ENCODE measurements at regions of chr7 and their contacts with region 1.

Region 1: DNA sequence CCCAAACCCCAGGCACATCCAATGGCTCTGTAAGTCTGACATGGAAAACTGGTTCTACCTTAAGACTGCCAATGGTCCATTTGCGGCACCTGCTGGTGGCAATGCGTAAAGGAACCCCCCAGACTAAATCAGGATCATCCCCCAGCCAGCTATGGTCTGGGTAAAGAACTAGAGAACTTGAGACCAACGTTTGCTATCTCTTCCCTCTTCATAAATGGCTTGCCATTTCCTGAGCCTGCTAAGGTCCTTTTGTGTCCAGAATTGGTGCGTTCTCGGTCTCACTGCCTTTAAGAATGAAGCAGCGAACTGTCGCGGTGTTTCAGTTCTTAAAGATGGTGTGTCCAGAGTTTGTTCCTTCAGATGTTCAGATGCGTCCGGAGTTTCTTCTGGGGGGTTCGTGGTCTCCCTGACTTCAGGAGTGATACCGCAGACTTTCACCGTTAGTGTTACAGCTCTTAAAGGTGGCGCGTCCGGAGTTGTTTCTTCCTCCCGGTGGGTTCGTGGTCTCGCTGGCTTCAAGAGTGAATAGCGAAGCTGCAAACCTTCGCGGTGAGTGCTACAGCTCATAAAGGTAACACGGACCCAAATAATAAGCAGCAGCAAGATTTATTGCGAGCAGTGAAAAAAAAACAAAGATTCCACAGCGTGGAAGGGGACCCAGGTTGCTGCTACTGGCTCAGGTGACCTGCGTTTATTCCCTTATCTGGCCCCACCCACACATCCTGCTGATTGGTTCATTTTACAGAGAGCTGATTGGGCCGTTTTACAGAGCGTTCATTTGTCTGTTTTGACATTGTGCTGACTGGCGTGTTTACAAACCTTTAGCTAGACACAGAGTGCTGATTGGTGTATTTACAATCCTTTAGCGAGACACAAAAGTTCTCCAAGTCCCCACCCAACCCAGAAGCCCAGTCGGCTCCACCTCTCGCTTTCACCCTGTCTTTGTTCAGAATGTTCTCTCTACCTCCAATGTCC is 95.4 kb downstream of the ELMO1 start:
- DNase-seq: peak; percentile 34 to 61 (median 57)
- H3K4me3 ChIP-seq: peak overlapping the region; percentile 14 to 72 (median 33)
- H3K4me3 Mint-ChIP-seq: peak overlapping the region; percentile 84 to 92
- H3K27ac ChIP-seq: peak overlapping the region in 1 of 2 donors; percentile 25
- H3K27ac Mint-ChIP-seq: peak overlapping the region; percentile 15 to 73 (median 62)
- H3K4me1 ChIP-seq: peaks cover 47% of the 10 kb centered on the region in 2 donors
- H3K4me1 Mint-ChIP-seq: peaks cover 79% of the 10 kb centered on the region
- H3K27me3 ChIP-seq: no peaks in the 10 kb centered on the region
- H3K27me3 Mint-ChIP-seq: peaks cover 0 to 4% (median 0%) of the 10 kb centered on the region in 3 donors
- CTCF ChIP-seq: peak; percentile 77

Region 2: DNA sequence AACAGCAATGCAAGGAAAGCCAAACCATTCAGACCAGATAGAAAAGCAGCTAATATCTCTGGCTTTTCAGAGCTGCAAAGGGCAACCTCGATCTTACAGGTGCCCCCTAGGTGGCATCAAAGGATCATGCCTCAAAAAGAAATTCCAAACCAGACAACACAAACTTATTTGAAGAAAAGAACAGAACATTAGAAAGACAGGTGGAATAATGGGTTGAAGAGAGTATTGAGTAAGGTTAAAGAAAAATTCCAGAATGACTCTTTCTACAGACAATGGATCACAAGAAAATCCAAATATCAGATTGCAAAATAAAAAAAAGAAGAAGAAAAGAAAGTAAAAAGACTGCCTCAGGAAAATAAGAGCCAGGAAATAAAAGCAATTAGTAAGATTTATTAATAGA is 118.3 kb before region 1 on chr7:
- intact Hi-C with region 1: loop called in 1 of 2 experiments (anchors 2 kb)
- DNase-seq: peak in 2 of 3 donors; percentile 14 to 19
- H3K4me3 ChIP-seq: no peak overlapping the region
- H3K4me3 Mint-ChIP-seq: no peak overlapping the region
- H3K27ac ChIP-seq: no peak overlapping the region
- H3K27ac Mint-ChIP-seq: peak overlapping the region in 2 of 7 donors; percentile 5 to 7
- H3K4me1 ChIP-seq: no peaks in the 10 kb centered on the region
- H3K4me1 Mint-ChIP-seq: no peaks in the 10 kb centered on the region
- H3K27me3 ChIP-seq: no peaks in the 10 kb centered on the region
- H3K27me3 Mint-ChIP-seq: no peaks in the 10 kb centered on the region
- CTCF ChIP-seq: peak; percentile 64

Region 3: GRCh38 chr7:37311355-37311754 is 41.9 kb before region 1 on chr7:
- intact Hi-C with region 1: loop called in 1 of 2 experiments (anchors 5 kb)
- DNase-seq: peak; percentile 34 to 48 (median 43)
- H3K4me3 ChIP-seq: no peak overlapping the region
- H3K4me3 Mint-ChIP-seq: no peak overlapping the region
- H3K27ac ChIP-seq: peak overlapping the region in 1 of 2 donors; percentile 71
- H3K27ac Mint-ChIP-seq: peak overlapping the region; percentile 85 to 95 (median 89)
- H3K4me1 ChIP-seq: peaks cover 33 to 41% of the 10 kb centered on the region in 2 donors
- H3K4me1 Mint-ChIP-seq: peaks cover 40% of the 10 kb centered on the region
- H3K27me3 ChIP-seq: no peaks in the 10 kb centered on the region
- H3K27me3 Mint-ChIP-seq: no peaks in the 10 kb centered on the region
- CTCF ChIP-seq: no peak

Region 4: DNA sequence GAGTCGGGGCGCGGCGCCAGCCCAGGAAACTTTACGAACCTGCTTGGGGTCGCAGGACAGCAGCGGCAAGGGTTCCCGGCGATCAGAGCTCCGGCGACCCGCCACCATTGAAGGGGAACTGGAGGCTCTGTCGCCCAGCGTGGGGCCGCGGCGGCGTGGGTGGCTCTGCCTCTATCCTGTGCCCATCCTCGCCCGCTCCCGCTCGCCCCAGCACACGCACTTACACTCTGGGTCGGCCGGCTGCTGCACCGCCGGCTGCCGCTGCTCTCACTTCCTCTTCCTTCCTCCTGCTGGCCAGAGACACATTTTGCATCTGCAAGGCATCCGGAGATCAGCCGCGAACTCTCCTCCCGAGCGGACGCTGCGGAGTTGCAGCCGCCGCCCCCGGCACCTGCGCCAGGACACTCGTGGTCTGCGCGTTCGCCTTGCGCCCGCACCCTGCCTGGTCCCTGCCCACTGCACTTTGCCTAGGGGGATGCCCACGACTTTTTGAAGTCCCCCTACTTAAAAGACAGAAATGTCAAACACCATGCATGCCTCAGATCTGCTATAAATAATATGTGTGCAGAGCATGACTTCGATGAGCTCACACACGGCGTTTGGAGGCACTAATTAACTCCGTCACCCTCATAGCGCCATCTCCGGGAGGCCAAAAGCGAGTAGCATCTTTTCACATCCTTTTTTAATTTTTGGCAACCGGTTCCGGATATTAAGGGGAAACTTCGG is 95.5 kb after region 1 on chr7 and contains the start of gene ELMO1:
- intact Hi-C with region 1: loop called in 1 of 2 experiments (anchors 1 kb)
- DNase-seq: peak; percentile 85 to 89 (median 87)
- H3K4me3 ChIP-seq: peak within 1 kb of the TSS; percentile 74 to 94 (median 91)
- H3K4me3 Mint-ChIP-seq: peak within 1 kb of the TSS; percentile 93 to 96
- H3K27ac ChIP-seq: peak within 1 kb of the TSS; percentile 89 to 92
- H3K27ac Mint-ChIP-seq: peak within 1 kb of the TSS; percentile 86 to 98 (median 93)
- H3K4me1 ChIP-seq: peaks cover 47 to 50% of the 10 kb centered on the region in 2 donors
- H3K4me1 Mint-ChIP-seq: peaks cover 52% of the 10 kb centered on the region
- H3K27me3 ChIP-seq: no peaks in the 10 kb centered on the region
- H3K27me3 Mint-ChIP-seq: peaks cover 0 to 5% (median 2%) of the 10 kb centered on the region in 3 donors
- CTCF ChIP-seq: peak; percentile 66
- polyA plus RNA-seq, gene ELMO1: 46.6 to 50.2 (median 46.7) TPM

Region 5: DNA sequence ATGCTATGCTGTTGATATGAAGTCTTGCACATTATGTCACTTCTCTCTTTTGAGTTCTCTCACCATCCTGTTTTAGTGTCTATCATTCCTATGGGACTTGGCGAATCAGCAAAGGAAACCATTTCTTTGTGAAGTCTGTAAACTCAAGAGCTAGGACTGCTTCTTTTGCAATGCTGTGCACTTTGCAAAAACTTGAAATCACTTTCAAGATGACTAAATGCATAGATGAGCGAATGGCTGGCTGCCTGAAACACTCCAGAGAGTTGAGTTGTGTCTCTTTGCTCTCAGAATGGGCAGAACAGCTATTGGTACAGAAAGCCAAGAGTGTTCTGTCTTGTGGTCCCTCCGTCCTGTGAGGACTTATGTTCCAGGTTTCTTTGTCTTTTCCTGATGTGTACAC is 113.7 kb after region 1 on chr7:
- intact Hi-C with region 1: no loop called
- DNase-seq: no peak
- H3K4me3 ChIP-seq: no peak overlapping the region
- H3K4me3 Mint-ChIP-seq: no peak overlapping the region
- H3K27ac ChIP-seq: no peak overlapping the region
- H3K27ac Mint-ChIP-seq: no peak overlapping the region
- H3K4me1 ChIP-seq: peaks cover 2 to 5% of the 10 kb centered on the region in 2 donors
- H3K4me1 Mint-ChIP-seq: peaks cover 6% of the 10 kb centered on the region
- H3K27me3 ChIP-seq: no peaks in the 10 kb centered on the region
- H3K27me3 Mint-ChIP-seq: peaks cover 1 to 5% (median 2%) of the 10 kb centered on the region in 3 donors
- CTCF ChIP-seq: no peak